ENCODE measurements at regions of chr14 and their contacts with region 1.

Region 1: GRCh38 chr14:22994762-22995275 is 12.5 kb upstream of the AJUBA start:
- DNase-seq: peak in 3 of 5 donors; percentile 37 to 71 (median 61)
- H3K4me3 ChIP-seq: no peak overlapping the region
- H3K27ac ChIP-seq: no peak overlapping the region
- H3K4me1 ChIP-seq: peaks cover 7% of the 10 kb centered on the region
- H3K27me3 ChIP-seq: no peaks in the 10 kb centered on the region
- CTCF ChIP-seq: peak in 1 of 3 donors; percentile 33
- EP300 ChIP-seq: no peak
- POLR2A ChIP-seq: no peak

Region 2: DNA sequence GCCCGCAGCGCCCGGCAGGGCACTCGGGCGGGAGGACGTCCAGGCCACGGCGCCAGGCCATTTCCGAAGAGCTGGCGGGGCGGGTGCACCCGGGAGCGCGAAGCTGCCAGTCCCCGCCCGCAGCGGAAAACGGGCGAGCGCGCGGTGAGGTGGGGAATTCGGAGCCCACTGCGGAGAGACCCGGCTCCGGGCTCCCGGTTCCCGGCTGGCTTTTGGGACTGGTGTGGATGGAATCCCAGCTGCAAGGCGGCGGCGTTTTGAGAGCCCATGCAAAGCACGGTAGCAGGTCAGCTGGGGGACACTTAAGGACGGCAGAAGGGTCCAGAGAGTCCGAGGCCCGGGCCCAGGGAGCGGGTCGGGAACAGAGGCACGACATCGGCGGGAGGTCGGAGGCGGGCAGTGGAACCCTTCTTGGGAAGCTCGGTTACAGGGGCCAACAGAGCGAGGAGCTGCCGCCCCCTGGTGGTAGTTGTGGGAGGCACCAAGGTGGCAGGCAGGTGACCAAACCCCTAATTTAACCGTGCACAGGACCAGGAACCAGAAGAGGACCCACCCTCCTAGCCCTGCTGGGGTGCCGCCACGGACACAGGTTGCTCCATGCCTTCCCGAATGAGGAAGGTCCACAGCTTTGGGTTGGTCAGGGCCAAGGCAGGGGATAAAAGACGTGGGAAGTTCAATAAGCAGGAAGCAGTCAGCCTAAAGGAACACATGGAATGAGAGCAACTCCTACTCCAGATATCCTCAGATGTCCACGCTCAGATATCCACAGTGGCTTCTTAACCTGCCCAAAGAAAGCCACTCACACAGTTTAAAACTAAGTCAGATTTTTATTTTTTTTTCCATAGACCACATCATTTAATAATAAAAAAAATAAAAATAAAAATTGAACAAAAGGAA is 63.2 kb after region 1 on chr14:
- intact Hi-C with region 1: loop called in 1 of 4 experiments (anchors 5 kb)
- DNase-seq: peak; percentile 86 to 92 (median 90)
- H3K4me3 ChIP-seq: peak overlapping the region; percentile 54
- H3K27ac ChIP-seq: peak overlapping the region; percentile 10 to 45
- H3K4me1 ChIP-seq: no peaks in the 10 kb centered on the region
- H3K27me3 ChIP-seq: no peaks in the 10 kb centered on the region
- CTCF ChIP-seq: peak; percentile 86 to 95 (median 94)
- EP300 ChIP-seq: no peak
- POLR2A ChIP-seq: no peak

Measured in ovary (tissue), 10 donors.